ENCODE measurements at regions of chr4 and their contacts with region 1.

Region 1: DNA sequence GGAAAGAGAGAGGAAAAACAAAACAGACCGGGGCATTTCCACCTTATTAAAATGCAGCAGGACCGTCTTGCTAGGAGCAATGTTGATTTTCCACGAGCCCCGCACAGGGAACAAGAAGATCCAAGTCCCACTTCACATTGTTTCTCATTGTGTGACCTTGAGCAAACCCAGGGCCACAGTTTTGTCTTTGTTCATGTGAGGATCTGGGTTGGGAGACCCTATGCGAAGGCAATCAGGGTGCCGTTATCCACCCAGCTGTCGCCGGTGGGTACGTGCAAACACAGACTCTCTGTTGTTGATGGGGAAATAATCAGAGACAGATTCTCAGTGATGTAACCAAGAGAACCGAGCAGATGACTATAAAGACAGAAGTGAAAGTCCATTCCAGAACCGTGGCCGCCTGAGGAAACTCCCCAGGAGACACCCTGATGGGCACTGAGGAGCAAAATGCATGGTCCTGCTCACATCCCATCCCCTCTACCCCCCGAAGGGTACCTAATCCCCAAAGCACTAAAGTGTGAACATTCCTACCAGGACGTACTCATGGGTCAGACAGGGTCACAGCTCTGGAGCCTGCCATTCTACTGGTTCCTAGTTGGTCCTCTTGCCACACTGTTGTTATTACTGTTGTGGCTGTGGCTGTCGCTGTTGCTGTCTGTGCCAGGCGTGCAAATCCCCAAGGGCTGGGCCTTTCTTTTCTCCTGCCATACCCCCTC is 102.7 kb upstream of the RBPJ start:
- DNase-seq: no peak
- H3K4me3 ChIP-seq: no peak overlapping the region
- H3K27ac ChIP-seq: no peak overlapping the region
- H3K4me1 ChIP-seq: peaks cover 48% of the 10 kb centered on the region
- H3K27me3 ChIP-seq: no peaks in the 10 kb centered on the region
- CTCF ChIP-seq: no peak

Region 2: DNA sequence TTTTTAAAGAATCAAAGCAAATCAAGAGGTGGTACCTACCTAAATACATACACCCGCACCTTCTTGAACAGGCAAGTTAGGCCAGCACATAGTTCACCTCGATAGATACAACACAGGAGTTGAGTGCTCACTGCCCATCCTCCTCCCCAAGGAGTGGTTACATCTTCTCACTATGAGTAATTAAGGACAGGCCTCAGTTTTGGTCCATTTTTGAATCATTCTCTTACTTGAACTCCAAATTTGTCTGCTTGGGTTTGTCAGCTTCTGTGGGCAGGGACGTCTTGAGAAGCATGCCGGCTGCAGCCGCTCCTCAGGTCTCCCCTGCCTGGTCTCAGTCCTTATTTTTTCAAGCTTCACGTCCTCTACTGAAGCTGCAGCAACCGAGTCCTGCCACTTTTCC is 87.9 kb before region 1 on chr4:
- CTCF ChIA-PET with region 1: no interaction called
- POLR2A ChIA-PET with region 1: no interaction called
- intact Hi-C with region 1: no loop called
- DNase-seq: no peak
- H3K4me3 ChIP-seq: no peak overlapping the region
- H3K27ac ChIP-seq: no peak overlapping the region
- H3K4me1 ChIP-seq: 0 out of 2 replicates have a peak, but pooled peaks cover 4% of the 10 kb centered on the region
- H3K27me3 ChIP-seq: no peaks in the 10 kb centered on the region
- CTCF ChIP-seq: no peak

Region 3: GRCh38 chr4:26197018-26197779 is 20.9 kb before region 1 on chr4:
- CTCF ChIA-PET with region 1: no interaction called
- POLR2A ChIA-PET with region 1: no interaction called
- intact Hi-C with region 1: loop called (anchors 1 kb)
- DNase-seq: peak; percentile 79 to 96
- H3K4me3 ChIP-seq: no peak overlapping the region
- H3K27ac ChIP-seq: peak overlapping the region; percentile 82
- H3K4me1 ChIP-seq: peaks cover 23% of the 10 kb centered on the region
- H3K27me3 ChIP-seq: no peaks in the 10 kb centered on the region
- CTCF ChIP-seq: no peak

Region 4: GRCh38 chr4:26252349-26253025 is 34.4 kb after region 1 on chr4:
- CTCF ChIA-PET with region 1: no interaction called
- POLR2A ChIA-PET with region 1: no interaction called
- intact Hi-C with region 1: loop called (anchors 2 kb)
- DNase-seq: peak; percentile 69 to 92
- H3K4me3 ChIP-seq: no peak overlapping the region
- H3K27ac ChIP-seq: peak overlapping the region; percentile 53
- H3K4me1 ChIP-seq: peaks cover 13% of the 10 kb centered on the region
- H3K27me3 ChIP-seq: no peaks in the 10 kb centered on the region
- CTCF ChIP-seq: no peak

Region 5: GRCh38 chr4:26288355-26288909 is 70.3 kb after region 1 on chr4:
- CTCF ChIA-PET with region 1: no interaction called
- POLR2A ChIA-PET with region 1: no interaction called
- intact Hi-C with region 1: loop called (anchors 1 kb)
- DNase-seq: peak; percentile 20 to 90
- H3K4me3 ChIP-seq: peak overlapping the region; percentile 11; the same call in 1 of the 2 replicates
- H3K27ac ChIP-seq: peak overlapping the region; percentile 77
- H3K4me1 ChIP-seq: peaks cover 34% of the 10 kb centered on the region
- H3K27me3 ChIP-seq: no peaks in the 10 kb centered on the region
- CTCF ChIP-seq: no peak

Measured in PC-9 (cell line).